ENCODE measurements at regions of chr10 and their contacts with region 1.

Region 1: DNA sequence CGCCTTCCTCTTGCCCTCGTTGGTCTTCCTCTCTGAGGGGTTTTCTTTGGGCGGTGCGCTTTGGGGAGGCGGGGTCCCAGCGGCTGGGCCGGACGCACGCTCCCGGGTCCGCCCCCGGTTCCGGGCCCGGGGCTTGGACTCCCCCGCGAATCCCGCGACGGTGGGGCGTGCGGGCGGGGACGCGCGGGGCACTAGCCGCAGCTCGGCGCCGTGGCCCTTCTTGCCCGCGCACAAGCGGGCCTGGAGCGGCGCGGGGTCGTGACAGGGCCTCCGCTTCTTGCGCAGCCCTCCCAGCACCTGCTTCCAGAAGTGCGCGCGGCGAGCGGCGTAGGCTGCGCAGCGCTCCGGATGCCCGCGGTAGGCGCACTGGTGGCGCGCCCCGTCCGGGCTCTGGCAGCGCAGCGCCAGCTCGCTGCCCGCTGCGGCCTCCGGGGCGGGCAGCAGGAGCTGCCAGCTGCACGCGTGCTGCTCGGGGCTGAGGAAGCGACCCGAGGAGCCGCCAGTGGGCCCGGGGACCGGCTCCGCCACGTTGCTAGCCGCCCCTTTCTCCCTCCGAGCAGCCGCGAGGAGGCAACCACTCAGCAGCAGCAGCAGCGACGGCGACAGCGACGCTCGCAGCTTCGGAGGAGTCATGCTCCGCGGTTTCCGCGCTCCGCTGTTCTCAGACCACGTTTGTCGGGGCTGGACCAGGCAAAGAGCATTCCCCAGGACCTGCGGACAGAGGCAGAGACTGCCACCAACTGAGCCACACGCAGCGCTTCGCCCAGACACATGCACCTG is 759 bp downstream of the FGFBP3 start:
- DNase-seq: peak; percentile 27 to 83 (median 60)
- ATAC-seq: peak; percentile 87 to 91 (median 87)
- H3K4me3 ChIP-seq: peak overlapping the region; percentile 63 to 95
- H3K4me3 Mint-ChIP-seq: peak overlapping the region; percentile 86 to 96 (median 90)
- H3K27ac ChIP-seq: peak overlapping the region; percentile 53
- H3K27ac Mint-ChIP-seq: peak overlapping the region; percentile 85 to 92
- H3K4me1 ChIP-seq: peaks cover 12 to 17% of the 10 kb centered on the region in 2 experiments
- H3K4me1 Mint-ChIP-seq: peaks cover 25 to 29% (median 28%) of the 10 kb centered on the region in 3 donors
- H3K27me3 ChIP-seq: peaks cover 0 to 3% of the 10 kb centered on the region in 2 experiments
- H3K27me3 Mint-ChIP-seq: peaks cover 4 to 6% of the 10 kb centered on the region in 2 donors

Region 2: GRCh38 chr10:91389636-91390512 is 518.7 kb before region 1 on chr10:
- CTCF ChIA-PET with region 1: interaction called, 4 to 12 read pairs
- POLR2A ChIA-PET with region 1: no interaction called
- DNase-seq: peak in 8 of 35 experiments; percentile 3 to 85 (median 25)
- ATAC-seq: peak; percentile 83 to 96 (median 90)
- H3K4me3 ChIP-seq: no peak overlapping the region
- H3K4me3 Mint-ChIP-seq: peak overlapping the region in 2 of 3 donors; percentile 0 to 7
- H3K27ac ChIP-seq: no peak overlapping the region
- H3K27ac Mint-ChIP-seq: peak overlapping the region in 1 of 2 donors; percentile 44
- H3K4me1 ChIP-seq: no peaks in the 10 kb centered on the region
- H3K4me1 Mint-ChIP-seq: peaks cover 5 to 7% (median 5%) of the 10 kb centered on the region in 3 donors
- H3K27me3 ChIP-seq: no peaks in the 10 kb centered on the region
- H3K27me3 Mint-ChIP-seq: peaks cover 16 to 39% of the 10 kb centered on the region in 2 donors

Region 3: DNA sequence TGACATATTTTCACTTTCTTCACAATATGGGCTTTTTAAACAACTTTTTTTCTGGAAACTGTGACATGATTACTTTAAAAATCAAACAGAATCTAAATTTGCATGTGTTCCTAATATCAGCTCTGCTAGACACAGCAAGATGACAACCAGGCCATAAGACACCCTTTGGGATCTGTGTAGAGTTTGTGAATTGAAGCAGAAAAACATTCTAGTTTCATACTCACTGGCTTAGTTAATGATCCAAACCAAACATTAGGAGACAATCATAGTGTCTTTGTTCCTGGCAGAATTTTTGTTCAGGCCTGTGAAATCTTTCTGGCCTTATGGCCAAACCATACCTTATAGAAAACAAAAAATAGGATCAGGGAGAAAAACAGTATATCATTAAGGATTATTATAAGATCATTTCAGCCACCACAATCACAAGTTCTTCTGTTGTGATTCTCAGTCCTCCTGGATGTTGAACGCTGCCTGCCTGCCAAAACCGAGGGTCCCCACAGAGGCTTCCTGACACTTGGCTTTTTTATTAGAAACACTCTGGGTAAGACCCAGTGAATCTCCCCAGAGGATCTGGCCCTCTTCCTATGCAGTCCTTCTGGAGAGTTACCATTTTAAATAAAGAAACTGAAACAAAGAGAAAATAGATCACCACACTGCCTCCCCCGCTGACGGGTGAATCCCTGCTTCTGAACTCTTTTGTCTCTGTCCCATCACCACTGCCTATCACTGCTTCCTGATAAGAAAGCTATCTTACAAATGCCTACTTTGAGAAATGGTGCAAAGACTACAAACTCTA is 196.4 kb before region 1 on chr10:
- CTCF ChIA-PET with region 1: no interaction called
- POLR2A ChIA-PET with region 1: no interaction called
- DNase-seq: no peak
- ATAC-seq: no peak
- H3K4me3 ChIP-seq: no peak overlapping the region
- H3K4me3 Mint-ChIP-seq: no peak overlapping the region
- H3K27ac ChIP-seq: no peak overlapping the region
- H3K27ac Mint-ChIP-seq: no peak overlapping the region
- H3K4me1 ChIP-seq: no peaks in the 10 kb centered on the region
- H3K4me1 Mint-ChIP-seq: no peaks in the 10 kb centered on the region
- H3K27me3 ChIP-seq: no peaks in the 10 kb centered on the region
- H3K27me3 Mint-ChIP-seq: peaks cover 16 to 26% of the 10 kb centered on the region in 2 donors

Region 4: GRCh38 chr10:91758303-91759146 is 150.0 kb before region 1 on chr10:
- CTCF ChIA-PET with region 1: interaction called, 4 to 62 read pairs
- POLR2A ChIA-PET with region 1: no interaction called
- DNase-seq: peak in 1 of 35 experiments; percentile 74
- ATAC-seq: peak; percentile 59 to 84 (median 70)
- H3K4me3 ChIP-seq: no peak overlapping the region
- H3K4me3 Mint-ChIP-seq: no peak overlapping the region
- H3K27ac ChIP-seq: no peak overlapping the region
- H3K27ac Mint-ChIP-seq: no peak overlapping the region
- H3K4me1 ChIP-seq: peaks cover 0 to 2% of the 10 kb centered on the region in 2 experiments
- H3K4me1 Mint-ChIP-seq: peaks cover 5 to 7% (median 6%) of the 10 kb centered on the region in 3 donors
- H3K27me3 ChIP-seq: peaks cover 0 to 3% of the 10 kb centered on the region in 2 experiments
- H3K27me3 Mint-ChIP-seq: peaks cover 0 to 12% of the 10 kb centered on the region in 2 donors

Region 5: DNA sequence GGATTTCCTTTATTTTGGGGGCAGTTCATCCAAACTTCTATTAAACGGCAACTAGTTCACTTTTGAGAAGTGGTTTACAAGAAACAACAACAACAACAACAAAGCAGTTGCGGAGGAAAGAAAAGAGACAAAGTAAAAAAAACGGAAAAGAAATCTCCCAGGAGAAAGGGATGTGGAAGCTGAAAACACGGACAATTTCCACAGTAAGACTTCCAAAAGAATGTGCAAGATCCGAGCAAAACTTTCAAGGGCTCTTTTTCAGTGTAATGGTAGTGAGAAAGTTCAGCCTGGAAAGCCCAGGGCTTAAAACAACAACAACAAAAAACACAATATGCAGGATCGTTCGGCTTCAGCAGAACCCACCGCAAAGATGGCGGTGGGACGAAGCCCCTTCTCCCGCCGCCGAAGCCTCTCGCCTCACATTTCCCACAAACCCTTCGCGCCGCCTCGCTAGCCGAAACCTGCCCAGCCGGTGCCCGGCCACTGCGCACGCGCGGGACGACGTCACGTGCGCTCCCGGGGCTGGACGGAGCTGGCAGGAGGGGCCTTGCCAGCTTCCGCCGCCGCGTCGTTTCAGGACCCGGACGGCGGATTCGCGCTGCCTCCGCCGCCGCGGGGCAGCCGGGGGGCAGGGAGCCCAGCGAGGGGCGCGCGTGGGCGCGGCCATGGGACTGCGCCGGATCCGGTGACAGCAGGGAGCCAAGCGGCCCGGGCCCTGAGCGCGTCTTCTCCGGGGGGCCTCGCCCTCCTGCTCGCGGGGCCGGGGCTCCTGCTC is 110.5 kb before region 1 on chr10 and contains the start of gene TNKS2:
- CTCF ChIA-PET with region 1: interaction called, 5 to 11 read pairs
- POLR2A ChIA-PET with region 1: interaction called, 7 to 12 read pairs
- DNase-seq: peak; percentile 76 to 96 (median 85)
- ATAC-seq: peak; percentile 83 to 84 (median 83)
- H3K4me3 ChIP-seq: peak within 1 kb of the TSS; percentile 88 to 92
- H3K4me3 Mint-ChIP-seq: peak within 1 kb of the TSS; percentile 91 to 98 (median 97)
- H3K27ac ChIP-seq: peak within 1 kb of the TSS; percentile 86
- H3K27ac Mint-ChIP-seq: peak within 1 kb of the TSS; percentile 96 to 98
- H3K4me1 ChIP-seq: peaks cover 19 to 30% of the 10 kb centered on the region in 2 experiments
- H3K4me1 Mint-ChIP-seq: peaks cover 64 to 67% (median 65%) of the 10 kb centered on the region in 3 donors
- H3K27me3 ChIP-seq: no peaks in the 10 kb centered on the region
- H3K27me3 Mint-ChIP-seq: no peaks in the 10 kb centered on the region
- total RNA-seq, gene TNKS2: 41.0 to 53.7 (median 47.6) TPM

Region 6: GRCh38 chr10:93288654-93289634 is 1380.4 kb after region 1 on chr10:
- CTCF ChIA-PET with region 1: no interaction called
- POLR2A ChIA-PET with region 1: no interaction called
- DNase-seq: peak in 31 of 35 experiments; percentile 6 to 69 (median 25)
- ATAC-seq: no peak
- H3K4me3 ChIP-seq: no peak overlapping the region
- H3K4me3 Mint-ChIP-seq: no peak overlapping the region
- H3K27ac ChIP-seq: no peak overlapping the region
- H3K27ac Mint-ChIP-seq: no peak overlapping the region
- H3K4me1 ChIP-seq: peaks cover 0 to 2% of the 10 kb centered on the region in 2 experiments
- H3K4me1 Mint-ChIP-seq: no peaks in the 10 kb centered on the region
- H3K27me3 ChIP-seq: no peaks in the 10 kb centered on the region
- H3K27me3 Mint-ChIP-seq: peaks cover 0 to 3% of the 10 kb centered on the region in 2 donors